MCF 10A (cell line): ENCODE measurements at regions of chr1 and their contacts with region 1.

Region 1: DNA sequence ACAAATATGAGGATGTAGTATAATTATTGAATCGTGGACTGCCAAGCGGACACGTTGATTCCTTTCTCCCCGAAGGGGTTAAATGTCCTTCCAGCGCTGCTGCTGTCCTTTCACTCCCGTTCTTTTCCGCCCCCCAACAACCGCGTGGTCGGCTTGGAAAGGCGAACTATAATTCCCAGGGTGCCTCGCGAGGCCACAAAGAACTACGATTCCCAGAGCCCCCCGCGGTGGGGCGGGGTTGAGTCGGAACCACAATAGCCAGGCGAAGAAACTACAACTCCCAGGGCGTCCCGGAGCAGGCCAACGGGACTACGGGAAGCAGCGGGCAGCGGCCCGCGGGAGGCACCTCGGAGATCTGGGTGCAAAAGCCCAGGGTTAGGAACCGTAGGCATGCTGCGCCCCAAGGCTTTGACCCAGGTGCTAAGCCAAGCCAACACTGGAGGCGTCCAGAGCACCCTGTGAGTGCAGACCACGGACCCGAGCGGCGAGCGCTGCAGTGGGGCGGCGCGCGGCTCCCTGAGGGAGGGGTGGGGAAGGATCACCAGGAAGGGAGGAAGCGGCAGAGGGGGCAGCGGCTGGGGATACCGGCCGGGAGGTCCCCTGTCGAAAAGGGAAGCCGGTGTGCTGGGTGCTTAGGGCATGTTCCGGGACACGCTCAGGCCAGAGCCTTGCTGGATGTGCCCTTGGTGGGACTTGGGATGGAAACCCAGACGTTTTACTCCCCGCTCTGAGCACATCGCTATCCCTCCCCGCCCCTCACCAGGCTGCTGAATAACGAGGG is at the start of gene LAMTOR2:
- DNase-seq: peak; percentile 100
- H3K4me3 Mint-ChIP-seq: peak within 1 kb of the TSS; percentile 99
- H3K27ac Mint-ChIP-seq: peak within 1 kb of the TSS; percentile 95
- H3K4me1 Mint-ChIP-seq: peaks cover 33% of the 10 kb centered on the region
- H3K27me3 Mint-ChIP-seq: no peaks in the 10 kb centered on the region
- CTCF ChIP-seq: no peak
- total RNA-seq, gene LAMTOR2: 88.1 and 104 TPM in 2 replicates

Region 2: GRCh38 chr1:155648551-155649147 is 406.0 kb before region 1 on chr1:
- CTCF ChIA-PET with region 1: no interaction called
- POLR2A ChIA-PET with region 1: no interaction called
- intact Hi-C with region 1: loop called (anchors 10 kb)
- DNase-seq: peak; percentile 97
- H3K4me3 Mint-ChIP-seq: peak overlapping the region; percentile 73
- H3K27ac Mint-ChIP-seq: peak overlapping the region; percentile 47
- H3K4me1 Mint-ChIP-seq: peaks cover 53% of the 10 kb centered on the region
- H3K27me3 Mint-ChIP-seq: no peaks in the 10 kb centered on the region
- CTCF ChIP-seq: peak; percentile 61

Region 3: DNA sequence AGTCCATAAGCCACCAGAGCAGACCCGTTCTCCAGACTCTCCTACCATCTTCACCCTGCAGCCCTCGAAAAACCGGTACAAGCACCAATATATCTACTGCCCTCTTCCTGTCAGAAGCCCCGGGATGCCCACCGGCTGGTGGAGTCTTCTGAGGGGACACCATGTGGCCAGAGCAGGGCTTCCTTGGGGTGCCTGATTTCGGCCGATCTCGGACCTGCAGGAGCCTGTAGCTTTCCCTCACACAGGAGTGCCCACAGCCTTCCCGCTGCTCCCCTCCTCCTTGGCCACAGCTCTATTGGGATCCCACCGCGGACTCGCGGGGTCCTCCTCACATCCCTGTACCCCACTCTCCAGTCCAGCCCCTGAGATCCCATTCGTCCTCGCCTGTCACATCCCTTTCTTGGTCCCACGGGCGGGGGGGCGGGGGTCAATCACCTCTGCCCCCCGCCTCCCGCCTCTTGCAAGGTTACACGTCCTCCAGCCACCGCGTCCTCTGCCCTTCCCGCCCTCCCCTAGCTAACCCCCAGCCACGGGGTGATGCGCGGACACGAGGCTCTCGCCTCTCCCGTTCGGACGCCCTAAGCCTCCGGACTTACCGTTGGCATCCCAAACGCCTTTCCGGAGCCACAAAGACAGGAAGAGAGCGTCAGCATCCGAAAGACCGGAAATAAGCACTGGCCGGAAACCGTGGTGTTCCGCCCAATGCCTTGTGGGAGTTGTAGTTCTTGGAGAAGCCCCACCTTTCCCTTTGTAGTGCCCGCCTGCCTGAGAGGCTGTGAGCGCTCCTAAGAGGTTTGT is 34.2 kb before region 1 on chr1 and contains the start of gene SSR2:
- CTCF ChIA-PET with region 1: interaction called, 4 read pairs
- POLR2A ChIA-PET with region 1: interaction called, 6 read pairs
- intact Hi-C with region 1: loop called (anchors 2 kb)
- DNase-seq: peak; percentile 98
- H3K4me3 Mint-ChIP-seq: peak within 1 kb of the TSS; percentile 97
- H3K27ac Mint-ChIP-seq: peak within 1 kb of the TSS; percentile 86
- H3K4me1 Mint-ChIP-seq: peaks cover 22% of the 10 kb centered on the region
- H3K27me3 Mint-ChIP-seq: no peaks in the 10 kb centered on the region
- CTCF ChIP-seq: no peak
- total RNA-seq, gene SSR2: 477 and 589 TPM in 2 replicates

Region 4: GRCh38 chr1:156042828-156043227 is 11.9 kb before region 1 on chr1:
- CTCF ChIA-PET with region 1: interaction called, 11 read pairs
- POLR2A ChIA-PET with region 1: interaction called, 3 read pairs
- intact Hi-C with region 1: no loop called
- DNase-seq: no peak
- H3K4me3 Mint-ChIP-seq: no peak overlapping the region
- H3K27ac Mint-ChIP-seq: no peak overlapping the region
- H3K4me1 Mint-ChIP-seq: peaks cover 8% of the 10 kb centered on the region
- H3K27me3 Mint-ChIP-seq: no peaks in the 10 kb centered on the region
- CTCF ChIP-seq: no peak

Region 5: GRCh38 chr1:156065212-156065611 is 10.5 kb after region 1 on chr1:
- CTCF ChIA-PET with region 1: interaction called, 12 read pairs
- POLR2A ChIA-PET with region 1: interaction called, 4 read pairs
- intact Hi-C with region 1: no loop called
- DNase-seq: no peak
- H3K4me3 Mint-ChIP-seq: no peak overlapping the region
- H3K27ac Mint-ChIP-seq: no peak overlapping the region
- H3K4me1 Mint-ChIP-seq: peaks cover 19% of the 10 kb centered on the region
- H3K27me3 Mint-ChIP-seq: no peaks in the 10 kb centered on the region
- CTCF ChIP-seq: no peak

Region 6: DNA sequence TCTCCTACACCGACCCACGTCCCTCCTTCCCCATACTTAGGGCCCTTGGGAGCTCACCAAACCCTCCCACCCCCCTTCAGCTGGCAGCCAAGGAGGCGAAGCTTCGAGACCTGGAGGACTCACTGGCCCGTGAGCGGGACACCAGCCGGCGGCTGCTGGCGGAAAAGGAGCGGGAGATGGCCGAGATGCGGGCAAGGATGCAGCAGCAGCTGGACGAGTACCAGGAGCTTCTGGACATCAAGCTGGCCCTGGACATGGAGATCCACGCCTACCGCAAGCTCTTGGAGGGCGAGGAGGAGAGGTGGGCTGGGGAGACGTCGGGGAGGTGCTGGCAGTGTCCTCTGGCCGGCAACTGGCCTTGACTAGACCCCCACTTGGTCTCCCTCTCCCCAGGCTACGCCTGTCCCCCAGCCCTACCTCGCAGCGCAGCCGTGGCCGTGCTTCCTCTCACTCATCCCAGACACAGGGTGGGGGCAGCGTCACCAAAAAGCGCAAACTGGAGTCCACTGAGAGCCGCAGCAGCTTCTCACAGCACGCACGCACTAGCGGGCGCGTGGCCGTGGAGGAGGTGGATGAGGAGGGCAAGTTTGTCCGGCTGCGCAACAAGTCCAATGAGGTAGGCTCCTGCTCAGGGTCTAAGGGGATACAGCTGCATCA is 81.3 kb after region 1 on chr1:
- CTCF ChIA-PET with region 1: no interaction called
- POLR2A ChIA-PET with region 1: no interaction called
- intact Hi-C with region 1: no loop called
- DNase-seq: no peak
- H3K4me3 Mint-ChIP-seq: no peak overlapping the region
- H3K27ac Mint-ChIP-seq: no peak overlapping the region
- H3K4me1 Mint-ChIP-seq: peaks cover 4% of the 10 kb centered on the region
- H3K27me3 Mint-ChIP-seq: no peaks in the 10 kb centered on the region
- CTCF ChIP-seq: no peak

Region 7: DNA sequence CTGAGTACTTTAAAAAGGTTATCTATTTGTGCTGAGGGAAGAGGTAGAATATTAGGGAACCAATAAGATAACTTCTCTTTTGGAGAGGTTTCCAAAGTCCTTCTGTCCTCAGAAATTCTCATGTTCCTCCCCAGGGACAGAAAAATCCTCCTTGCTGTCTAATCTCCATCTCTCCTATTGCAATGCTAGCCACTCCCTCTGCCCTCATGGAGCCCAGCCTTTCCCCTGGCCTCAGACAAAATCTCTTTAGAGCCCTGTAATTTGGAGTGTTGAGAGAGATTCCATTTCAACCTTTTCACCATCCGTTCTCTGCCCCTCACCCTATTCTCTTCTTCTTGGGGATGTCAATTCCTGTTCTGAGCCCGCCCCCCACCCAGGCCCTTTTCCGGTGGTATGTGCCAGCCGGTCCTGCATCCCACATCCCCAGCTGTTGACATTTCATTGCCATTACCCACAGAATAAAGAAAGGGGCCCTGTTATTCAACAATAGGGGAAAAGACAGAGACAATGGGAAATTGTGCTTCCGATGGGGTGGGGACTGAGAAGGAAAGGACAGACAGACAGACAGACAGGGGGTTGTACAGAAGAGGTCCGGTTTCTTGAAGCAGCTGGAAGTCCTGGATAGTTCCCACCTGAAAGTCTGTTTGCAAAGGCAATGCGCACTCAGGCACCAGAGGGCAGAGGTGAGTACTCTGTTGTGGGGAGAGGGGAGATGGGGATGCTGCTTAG is 564.3 kb after region 1 on chr1 and contains the start of gene HAPLN2:
- CTCF ChIA-PET with region 1: no interaction called
- POLR2A ChIA-PET with region 1: no interaction called
- intact Hi-C with region 1: no loop called
- DNase-seq: peak; percentile 57
- H3K4me3 Mint-ChIP-seq: no peak within 1 kb of the TSS
- H3K27ac Mint-ChIP-seq: no peak within 1 kb of the TSS
- H3K4me1 Mint-ChIP-seq: peaks cover 15% of the 10 kb centered on the region
- H3K27me3 Mint-ChIP-seq: peaks cover 54% of the 10 kb centered on the region
- CTCF ChIP-seq: peak; percentile 51
- total RNA-seq, gene HAPLN2: not detected in 2 replicates